Adrenal gland (tissue), 19 donors: ENCODE measurements at regions of chr4 and their contacts with region 1.

Region 1: DNA sequence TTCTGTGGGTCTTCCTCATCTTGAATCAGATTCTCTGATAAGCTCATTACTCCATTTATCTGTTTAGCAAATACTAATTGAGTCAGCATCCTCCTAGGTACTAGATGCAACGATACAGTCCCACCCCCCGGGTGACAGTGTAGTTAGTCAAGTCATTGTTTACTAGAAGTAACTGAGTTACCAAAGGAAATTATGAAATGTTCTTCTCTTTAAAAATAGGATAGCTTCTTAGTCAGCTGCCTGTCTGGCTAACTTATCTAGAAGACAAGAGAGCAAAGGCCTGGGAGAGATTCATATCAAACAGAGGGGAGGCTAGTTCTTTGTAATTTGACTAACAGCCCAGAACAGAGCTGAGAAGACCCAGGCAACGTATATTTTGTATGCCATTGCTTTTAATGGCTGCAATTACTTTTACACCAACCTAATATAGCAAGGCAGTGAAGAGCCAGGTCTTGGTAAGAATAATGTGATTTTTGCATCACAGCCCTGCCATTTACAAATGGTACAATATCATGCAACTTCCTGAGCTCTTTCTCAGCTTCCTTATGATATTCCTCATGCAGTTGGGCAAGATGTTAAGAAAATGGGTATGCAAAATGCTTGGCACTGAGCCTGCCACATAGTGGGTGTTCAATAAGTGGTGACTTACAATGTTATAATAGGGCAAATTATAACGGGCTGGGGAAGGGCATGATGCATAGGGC is 149.9 kb downstream of the CHIC2 start:
- DNase-seq: peak in 1 of 7 donors; percentile 7
- H3K4me3 ChIP-seq: no peak overlapping the region
- H3K27ac ChIP-seq: no peak overlapping the region
- H3K4me1 ChIP-seq: no peaks in the 10 kb centered on the region
- H3K27me3 ChIP-seq: no peaks in the 10 kb centered on the region
- CTCF ChIP-seq: no peak
- POLR2A ChIP-seq: no peak

Region 2: GRCh38 chr4:53576676-53577372 is 337.6 kb before region 1 on chr4:
- intact Hi-C with region 1: no loop called
- DNase-seq: no peak
- H3K4me3 ChIP-seq: no peak overlapping the region
- H3K27ac ChIP-seq: peak overlapping the region in 2 of 5 donors; percentile 37 to 44
- H3K4me1 ChIP-seq: no peaks in the 10 kb centered on the region
- H3K27me3 ChIP-seq: no peaks in the 10 kb centered on the region
- CTCF ChIP-seq: no peak
- POLR2A ChIP-seq: no peak

Region 3: GRCh38 chr4:53592686-53593501 is 321.6 kb before region 1 on chr4:
- intact Hi-C with region 1: no loop called
- DNase-seq: peak; percentile 62 to 82 (median 75)
- H3K4me3 ChIP-seq: peak overlapping the region in 2 of 4 donors; percentile 14 to 61
- H3K27ac ChIP-seq: peak overlapping the region in 4 of 5 donors; percentile 10 to 82 (median 58)
- H3K4me1 ChIP-seq: peaks cover 0 to 11% of the 10 kb centered on the region in 2 donors
- H3K27me3 ChIP-seq: no peaks in the 10 kb centered on the region
- CTCF ChIP-seq: no peak
- POLR2A ChIP-seq: no peak

Region 4: GRCh38 chr4:53714236-53715140 is 200.0 kb before region 1 on chr4:
- intact Hi-C with region 1: loop called in 1 of 2 experiments (anchors 10 kb)
- DNase-seq: no peak
- H3K4me3 ChIP-seq: no peak overlapping the region
- H3K27ac ChIP-seq: no peak overlapping the region
- H3K4me1 ChIP-seq: no peaks in the 10 kb centered on the region
- H3K27me3 ChIP-seq: no peaks in the 10 kb centered on the region
- CTCF ChIP-seq: no peak
- POLR2A ChIP-seq: no peak

Region 5: GRCh38 chr4:54217642-54218495 is 303.4 kb after region 1 on chr4:
- intact Hi-C with region 1: loop called in 1 of 2 experiments (anchors 5 kb)
- DNase-seq: peak; percentile 71 to 88 (median 80)
- H3K4me3 ChIP-seq: peak overlapping the region in 1 of 4 donors; percentile 61
- H3K27ac ChIP-seq: peak overlapping the region in 1 of 5 donors; percentile 65
- H3K4me1 ChIP-seq: no peaks in the 10 kb centered on the region
- H3K27me3 ChIP-seq: no peaks in the 10 kb centered on the region
- CTCF ChIP-seq: peak; percentile 88 to 96 (median 92)
- POLR2A ChIP-seq: no peak